MCF 10A (cell line): ENCODE measurements at regions of chr10 and their contacts with region 1.

Region 1: GRCh38 chr10:19819419-19820033 is 3.3 kb downstream of the PLXDC2 start:
- DNase-seq: peak; percentile 89
- H3K4me3 Mint-ChIP-seq: no peak overlapping the region
- H3K27ac Mint-ChIP-seq: peak overlapping the region; percentile 6
- H3K4me1 Mint-ChIP-seq: peaks cover 30% of the 10 kb centered on the region
- H3K27me3 Mint-ChIP-seq: no peaks in the 10 kb centered on the region
- CTCF ChIP-seq: peak; percentile 69

Region 2: DNA sequence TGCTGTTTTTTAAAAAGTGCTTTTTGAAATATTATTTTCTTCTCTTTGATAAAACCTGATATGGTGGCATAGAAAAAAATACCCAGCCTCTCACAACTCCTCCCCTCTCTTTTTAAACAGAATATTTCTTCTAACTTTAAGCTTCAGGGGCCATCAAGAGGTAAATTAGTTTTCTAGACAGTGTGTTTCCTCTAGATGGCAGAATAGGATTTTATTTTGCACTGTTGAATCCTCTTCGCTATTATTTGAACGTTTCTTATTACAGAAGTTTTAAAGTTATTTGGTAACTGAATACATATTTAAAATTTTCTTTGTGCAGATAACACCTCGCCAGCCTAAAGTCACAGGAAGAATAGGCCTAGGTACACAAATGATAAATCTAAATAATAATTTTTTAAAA is 1130.0 kb before region 1 on chr10:
- CTCF ChIA-PET with region 1: interaction called, 7 read pairs
- POLR2A ChIA-PET with region 1: no interaction called
- intact Hi-C with region 1: loop called (anchors 2 kb)
- DNase-seq: peak; percentile 50
- H3K4me3 Mint-ChIP-seq: no peak overlapping the region
- H3K27ac Mint-ChIP-seq: no peak overlapping the region
- H3K4me1 Mint-ChIP-seq: no peaks in the 10 kb centered on the region
- H3K27me3 Mint-ChIP-seq: no peaks in the 10 kb centered on the region
- CTCF ChIP-seq: peak; percentile 43

Region 3: DNA sequence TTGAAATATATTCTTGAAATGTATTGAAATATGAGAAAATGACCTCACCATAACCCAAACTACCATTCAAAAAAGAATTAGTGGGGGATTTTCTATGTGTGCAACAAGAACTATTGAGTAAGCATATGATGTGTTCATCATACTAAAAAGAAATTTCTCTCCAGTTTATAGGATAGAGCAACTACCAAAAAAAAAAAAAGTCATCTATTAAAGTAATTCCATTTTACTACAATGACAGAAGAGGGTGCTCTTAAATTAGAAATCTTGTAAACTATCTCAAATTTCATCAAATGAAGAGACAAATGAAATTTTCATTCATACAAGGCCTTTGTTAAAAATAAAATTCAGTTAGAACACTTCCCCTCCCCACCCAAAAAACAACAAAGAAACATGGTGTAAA is 198.7 kb before region 1 on chr10:
- CTCF ChIA-PET with region 1: no interaction called
- POLR2A ChIA-PET with region 1: no interaction called
- intact Hi-C with region 1: loop called (anchors 2 kb)
- DNase-seq: no peak
- H3K4me3 Mint-ChIP-seq: no peak overlapping the region
- H3K27ac Mint-ChIP-seq: no peak overlapping the region
- H3K4me1 Mint-ChIP-seq: no peaks in the 10 kb centered on the region
- H3K27me3 Mint-ChIP-seq: no peaks in the 10 kb centered on the region
- CTCF ChIP-seq: peak; percentile 28

Region 4: DNA sequence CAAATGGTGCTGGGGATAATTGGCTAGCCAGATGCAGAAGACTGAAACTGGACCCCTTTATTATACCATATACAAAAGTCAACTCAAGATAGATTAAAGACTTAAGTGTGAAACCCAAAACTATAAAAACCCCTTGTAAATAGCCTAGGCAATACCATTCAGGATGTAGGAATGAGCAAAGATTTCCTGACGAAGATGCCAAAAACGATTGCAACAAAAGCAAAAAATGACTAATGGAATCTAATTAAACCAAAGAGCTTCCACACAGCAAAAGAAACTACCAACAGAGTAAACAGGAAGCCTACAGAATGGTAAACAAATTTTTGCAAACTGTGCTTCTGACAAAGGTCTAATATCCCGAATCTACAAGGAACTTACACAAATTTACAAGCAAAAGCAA is 34.2 kb before region 1 on chr10:
- CTCF ChIA-PET with region 1: no interaction called
- POLR2A ChIA-PET with region 1: no interaction called
- intact Hi-C with region 1: no loop called
- DNase-seq: peak; percentile 58
- H3K4me3 Mint-ChIP-seq: no peak overlapping the region
- H3K27ac Mint-ChIP-seq: no peak overlapping the region
- H3K4me1 Mint-ChIP-seq: peaks cover 12% of the 10 kb centered on the region
- H3K27me3 Mint-ChIP-seq: no peaks in the 10 kb centered on the region
- CTCF ChIP-seq: no peak

Region 5: GRCh38 chr10:19930936-19931893 is 111.7 kb after region 1 on chr10:
- CTCF ChIA-PET with region 1: interaction called, 4 read pairs
- POLR2A ChIA-PET with region 1: interaction called, 32 read pairs
- intact Hi-C with region 1: loop called (anchors 1 kb)
- DNase-seq: peak; percentile 66
- H3K4me3 Mint-ChIP-seq: peak overlapping the region; percentile 28
- H3K27ac Mint-ChIP-seq: peak overlapping the region; percentile 80
- H3K4me1 Mint-ChIP-seq: peaks cover 45% of the 10 kb centered on the region
- H3K27me3 Mint-ChIP-seq: no peaks in the 10 kb centered on the region
- CTCF ChIP-seq: no peak

Region 6: GRCh38 chr10:20276127-20276979 is 456.8 kb after region 1 on chr10:
- CTCF ChIA-PET with region 1: no interaction called
- POLR2A ChIA-PET with region 1: no interaction called
- intact Hi-C with region 1: loop called (anchors 10 kb)
- DNase-seq: peak; percentile 72
- H3K4me3 Mint-ChIP-seq: no peak overlapping the region
- H3K27ac Mint-ChIP-seq: peak overlapping the region; percentile 63
- H3K4me1 Mint-ChIP-seq: peaks cover 22% of the 10 kb centered on the region
- H3K27me3 Mint-ChIP-seq: no peaks in the 10 kb centered on the region
- CTCF ChIP-seq: no peak

Region 7: DNA sequence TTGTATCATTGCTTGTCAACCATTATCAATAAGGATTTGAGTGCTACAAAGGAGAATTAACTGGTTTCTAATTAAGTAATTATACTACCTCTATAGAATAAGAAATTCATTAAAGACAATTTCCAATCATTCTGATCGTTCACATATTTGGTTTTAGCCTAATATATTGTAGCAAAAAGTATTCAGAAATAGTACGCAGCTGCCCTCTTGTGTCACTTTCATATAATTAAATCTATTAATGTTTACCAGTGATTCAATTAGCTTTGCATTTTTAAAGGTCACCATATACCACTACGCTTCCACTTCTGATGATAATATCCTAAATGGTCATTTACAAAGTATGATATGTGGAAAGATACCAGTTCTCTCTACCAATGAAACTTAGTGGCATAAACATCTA is 949.3 kb after region 1 on chr10:
- CTCF ChIA-PET with region 1: interaction called, 14 read pairs
- POLR2A ChIA-PET with region 1: interaction called, 13 read pairs
- intact Hi-C with region 1: loop called (anchors 1 kb)
- DNase-seq: peak; percentile 42
- H3K4me3 Mint-ChIP-seq: no peak overlapping the region
- H3K27ac Mint-ChIP-seq: no peak overlapping the region
- H3K4me1 Mint-ChIP-seq: peaks cover 9% of the 10 kb centered on the region
- H3K27me3 Mint-ChIP-seq: no peaks in the 10 kb centered on the region
- CTCF ChIP-seq: peak; percentile 58